ENCODE measurements at regions of chr14 and their contacts with region 1.

Region 1: GRCh38 chr14:94548999-94549985 is 11.9 kb upstream of the SERPINA4 start:
- DNase-seq: no peak
- H3K4me3 ChIP-seq: no peak overlapping the region
- CTCF ChIP-seq: peak; percentile 83

Region 2: DNA sequence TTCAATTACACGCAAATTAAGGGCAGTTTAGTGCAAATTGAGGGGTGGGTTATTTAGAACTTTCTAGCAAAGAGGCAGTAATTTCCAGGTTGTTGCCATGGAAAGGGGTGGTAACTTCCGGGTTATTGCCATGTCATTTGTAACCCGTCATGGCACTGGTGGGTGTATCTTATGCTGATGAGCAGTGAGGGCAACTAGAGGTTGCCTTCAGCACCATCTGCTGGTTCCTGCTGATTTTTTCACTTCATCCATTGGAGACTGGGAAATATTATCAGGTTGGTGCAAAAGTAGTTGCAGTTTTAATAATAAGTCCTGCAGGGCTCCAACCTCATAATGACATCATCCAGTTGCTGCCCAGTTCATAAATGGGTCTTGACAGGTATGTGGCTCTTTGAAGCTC is 12.5 kb before region 1 on chr14:
- CTCF ChIA-PET with region 1: interaction called, 111 read pairs
- POLR2A ChIA-PET with region 1: no interaction called
- DNase-seq: no peak
- H3K4me3 ChIP-seq: no peak overlapping the region
- CTCF ChIP-seq: no peak

Region 3: DNA sequence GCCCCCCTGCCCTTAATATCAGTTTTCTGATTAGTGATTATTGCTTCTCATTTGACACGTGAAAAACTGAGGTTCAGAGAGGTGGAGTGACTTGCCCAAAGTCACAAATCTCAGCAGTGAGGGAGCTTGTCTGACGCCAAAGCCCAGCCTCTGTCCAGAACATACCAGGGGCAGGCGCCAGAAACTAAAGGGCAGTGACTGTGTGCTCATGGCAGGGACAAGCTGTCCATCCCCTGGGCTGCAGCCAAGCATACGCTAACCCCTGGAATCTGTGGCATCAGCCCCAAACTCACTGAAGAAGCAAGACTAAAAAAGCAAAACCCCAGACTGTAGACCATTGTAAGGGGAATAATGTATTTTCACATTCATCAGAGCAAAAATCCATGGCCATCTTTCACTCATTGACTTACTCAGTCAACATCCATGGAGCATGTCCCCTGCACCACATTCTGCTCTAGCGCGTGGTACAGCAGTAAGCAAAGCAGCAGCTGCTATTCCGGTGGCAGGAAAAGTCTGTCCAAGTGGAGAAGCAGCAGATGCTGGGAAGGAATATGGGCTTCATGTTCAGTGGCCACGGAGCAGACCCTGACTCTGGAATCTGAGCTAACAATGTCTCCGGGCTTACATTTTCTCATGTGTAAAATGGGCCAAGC is 10.5 kb after region 1 on chr14:
- CTCF ChIA-PET with region 1: interaction called, 71 read pairs
- POLR2A ChIA-PET with region 1: no interaction called
- DNase-seq: no peak
- H3K4me3 ChIP-seq: no peak overlapping the region
- CTCF ChIP-seq: no peak